CD14-positive monocyte (primary cell): ENCODE measurements at regions of chr1 and their contacts with region 1.

Region 1: DNA sequence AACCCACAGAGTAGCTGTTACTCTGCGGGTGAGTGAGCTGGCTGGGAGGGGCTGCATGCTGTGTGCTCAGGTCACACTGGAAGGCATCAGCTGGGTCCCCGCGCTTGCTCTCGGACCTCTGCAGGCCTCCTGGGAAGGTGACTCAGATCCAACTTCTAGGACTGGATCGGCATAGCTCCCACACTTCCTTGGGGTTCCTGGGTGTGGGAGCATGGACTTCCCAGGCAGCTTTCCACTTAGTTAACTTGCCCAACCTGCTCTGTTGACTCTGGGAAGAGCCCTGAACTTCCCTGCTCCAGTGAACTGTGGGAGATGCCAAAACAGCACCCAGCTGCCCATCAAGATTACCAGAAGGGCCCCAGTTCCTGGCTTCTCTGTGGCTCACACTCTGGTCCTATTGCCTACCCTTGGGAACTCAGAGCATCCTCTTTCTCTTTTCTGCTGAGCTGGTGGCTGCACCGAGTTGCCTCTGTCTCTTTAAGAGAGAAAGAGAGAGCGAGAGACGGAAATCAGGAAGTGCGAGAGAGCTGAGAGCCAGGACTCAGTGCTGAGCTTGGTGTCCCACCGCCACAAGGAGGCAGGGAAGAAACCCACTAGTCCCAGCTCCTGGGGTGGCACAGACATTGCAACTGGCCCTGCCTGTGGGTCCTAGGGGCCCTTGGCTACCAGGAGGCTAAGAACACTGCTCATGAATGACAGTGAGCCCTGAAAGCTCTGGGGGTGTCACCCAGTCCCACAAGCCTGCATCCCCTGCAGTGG is at the start of gene IKBKE:
- DNase-seq: peak; percentile 80 to 88 (median 84)
- H3K4me3 ChIP-seq: peak within 1 kb of the TSS; percentile 60 to 89 (median 88)
- H3K4me3 Mint-ChIP-seq: peak within 1 kb of the TSS; percentile 83 to 92
- H3K27ac ChIP-seq: peak within 1 kb of the TSS; percentile 83 to 94
- H3K27ac Mint-ChIP-seq: peak within 1 kb of the TSS; percentile 99 to 100 (median 100)
- H3K4me1 ChIP-seq: peaks cover 79 to 84% of the 10 kb centered on the region in 2 donors
- H3K4me1 Mint-ChIP-seq: peaks cover 80% of the 10 kb centered on the region
- H3K27me3 ChIP-seq: no peaks in the 10 kb centered on the region
- H3K27me3 Mint-ChIP-seq: peaks cover 0 to 5% (median 0%) of the 10 kb centered on the region in 3 donors
- CTCF ChIP-seq: peak; percentile 22
- polyA plus RNA-seq, gene IKBKE: 35.6 to 40.7 (median 37.6) TPM

Region 2: GRCh38 chr1:206503591-206504362 is 33.7 kb after region 1 on chr1:
- intact Hi-C with region 1: loop called in 1 of 2 experiments (anchors 2 kb)
- DNase-seq: peak; percentile 91 to 99 (median 92)
- H3K4me3 ChIP-seq: peak overlapping the region in 1 of 3 experiments; percentile 31
- H3K4me3 Mint-ChIP-seq: peak overlapping the region; percentile 5 to 76
- H3K27ac ChIP-seq: peak overlapping the region in 1 of 2 donors; percentile 48
- H3K27ac Mint-ChIP-seq: peak overlapping the region; percentile 74 to 95 (median 83)
- H3K4me1 ChIP-seq: peaks cover 37 to 63% of the 10 kb centered on the region in 2 donors
- H3K4me1 Mint-ChIP-seq: peaks cover 57% of the 10 kb centered on the region
- H3K27me3 ChIP-seq: peaks cover 15 to 30% of the 10 kb centered on the region in 2 donors
- H3K27me3 Mint-ChIP-seq: peaks cover 32 to 41% (median 33%) of the 10 kb centered on the region in 3 donors
- CTCF ChIP-seq: no peak